HepG2 (cell line): ENCODE measurements at regions of chr16 and their contacts with region 1.

Region 1: GRCh38 chr16:31458844-31459721 is at the start of gene ARMC5:
- DNase-seq: peak; percentile 98
- ATAC-seq: peak; percentile 76
- H3K4me3 ChIP-seq: peak within 1 kb of the TSS; percentile 71 to 98 (median 83)
- H3K27ac ChIP-seq: peak within 1 kb of the TSS; percentile 95
- H3K4me1 ChIP-seq: peaks cover 48% of the 10 kb centered on the region
- H3K27me3 ChIP-seq: no peaks in the 10 kb centered on the region; a peak in 1 of 5 replicates
- CTCF ChIP-seq: peak; percentile 90
- EP300 ChIP-seq: no peak; a peak in 1 of 4 replicates
- POLR2A ChIP-seq: peak; percentile 87 to 97
- RAD21 ChIP-seq: peak; percentile 63
- total RNA-seq, gene ARMC5: 13.0 and 22.3 TPM in 2 replicates

Region 2: DNA sequence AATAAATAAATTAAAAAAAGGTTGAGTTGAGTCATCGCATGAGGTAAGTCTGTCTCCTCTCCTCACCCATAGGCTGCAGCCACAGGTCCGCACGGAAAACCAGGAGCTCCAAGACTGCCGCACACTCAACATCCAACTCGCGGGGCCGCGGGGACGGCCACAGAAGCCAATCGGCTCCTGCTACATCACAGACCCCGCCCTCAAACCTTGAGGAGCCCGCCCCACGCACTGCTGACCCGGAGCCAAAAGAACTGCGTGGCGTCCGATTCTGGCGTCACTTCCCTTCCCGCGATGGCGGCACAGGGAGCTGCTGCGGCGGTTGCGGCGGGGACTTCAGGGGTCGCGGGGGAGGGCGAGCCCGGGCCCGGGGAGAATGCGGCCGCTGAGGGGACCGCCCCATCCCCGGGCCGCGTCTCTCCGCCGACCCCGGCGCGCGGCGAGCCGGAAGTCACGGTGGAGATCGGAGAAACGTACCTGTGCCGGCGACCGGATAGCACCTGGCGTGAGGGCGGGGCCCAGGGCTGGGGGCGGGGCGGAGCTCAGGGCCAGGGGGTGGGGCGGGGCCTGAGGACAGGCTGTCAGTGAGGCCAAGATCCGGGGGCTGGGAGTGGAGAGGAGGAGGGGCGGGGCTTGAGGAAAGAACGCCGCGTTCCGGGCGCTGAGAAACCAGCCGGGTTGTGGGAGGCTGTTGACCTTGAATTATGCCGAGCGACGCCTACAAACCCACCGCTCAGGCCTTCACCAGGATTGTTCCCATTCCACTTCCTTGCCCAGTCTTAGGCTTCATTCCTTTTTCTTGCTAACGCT is 341.5 kb before region 1 on chr16 and contains the start of gene KAT8:
- CTCF ChIA-PET with region 1: no interaction called
- POLR2A ChIA-PET with region 1: interaction called, 16 read pairs
- in situ Hi-C with region 1: no loop called
- intact Hi-C with region 1: no loop called
- DNase-seq: peak; percentile 99
- ATAC-seq: peak; percentile 93
- H3K4me3 ChIP-seq: peak within 1 kb of the TSS; percentile 67 to 83 (median 81)
- H3K27ac ChIP-seq: peak within 1 kb of the TSS; percentile 70
- H3K4me1 ChIP-seq: peaks cover 36% of the 10 kb centered on the region
- H3K27me3 ChIP-seq: no peaks in the 10 kb centered on the region; a peak in 1 of 5 replicates
- CTCF ChIP-seq: peak; percentile 10; the same call in 1 of the 2 replicates
- EP300 ChIP-seq: 0 out of 4 replicates have a peak, but pooled peaks of 1 of the 2 experiments have one; percentile 8
- POLR2A ChIP-seq: peak; percentile 80 to 94
- RAD21 ChIP-seq: peak; percentile 24; the same call in 1 of the 2 replicates
- total RNA-seq, gene KAT8: 69.5 and 79.0 TPM in 2 replicates

Region 3: GRCh38 chr16:31179747-31180459 is 279.2 kb before region 1 on chr16 and contains the start of gene FUS:
- CTCF ChIA-PET with region 1: no interaction called
- POLR2A ChIA-PET with region 1: interaction called, 12 read pairs
- in situ Hi-C with region 1: no loop called
- intact Hi-C with region 1: no loop called
- DNase-seq: peak; percentile 84
- ATAC-seq: peak; percentile 74
- H3K4me3 ChIP-seq: peak within 1 kb of the TSS; percentile 90 to 93 (median 93)
- H3K27ac ChIP-seq: peak within 1 kb of the TSS; percentile 94
- H3K4me1 ChIP-seq: peaks cover 50% of the 10 kb centered on the region
- H3K27me3 ChIP-seq: no peaks in the 10 kb centered on the region; a peak in 1 of 5 replicates
- CTCF ChIP-seq: peak; percentile 4
- EP300 ChIP-seq: peak in 1 of 2 experiments; percentile 28; a peak in 1 of 4 replicates
- POLR2A ChIP-seq: peak; percentile 99 to 100
- RAD21 ChIP-seq: 0 out of 2 replicates have a peak, but pooled peaks have one; percentile 27
- total RNA-seq, gene FUS: 64.8 and 68.1 TPM in 2 replicates

Region 4: DNA sequence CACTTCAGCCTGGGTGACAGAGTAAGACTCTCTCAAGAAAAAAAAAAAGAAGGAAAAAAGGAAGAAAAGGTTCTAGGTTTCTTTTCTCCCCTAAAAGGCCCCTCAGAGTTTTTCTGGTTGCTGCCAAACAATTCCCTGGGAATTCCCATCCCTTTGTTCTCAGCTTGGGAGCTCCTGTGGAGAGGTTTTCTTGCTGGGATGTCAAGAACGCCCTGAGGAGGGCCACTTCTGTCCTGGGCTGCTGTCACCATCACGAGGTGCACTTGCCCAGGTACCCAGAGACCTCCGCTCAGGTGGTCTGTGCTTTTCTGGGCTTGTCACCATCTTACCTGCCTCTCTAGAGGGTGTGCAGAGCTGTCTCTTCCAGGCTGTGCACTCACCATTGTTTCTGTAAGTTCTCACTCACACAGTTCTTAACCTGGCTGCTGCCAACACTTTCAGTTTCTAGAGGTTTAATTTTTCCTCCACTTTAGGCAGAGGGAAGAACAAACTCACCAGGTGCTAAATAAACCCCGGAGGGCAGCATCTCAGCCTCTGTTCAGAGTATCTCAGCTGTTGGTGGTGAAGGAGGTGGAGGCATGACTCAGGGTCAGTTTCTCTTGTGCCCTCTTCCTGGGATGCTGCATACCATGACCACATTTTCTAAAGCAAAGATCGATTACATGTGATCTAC is 28.6 kb before region 1 on chr16:
- CTCF ChIA-PET with region 1: no interaction called
- POLR2A ChIA-PET with region 1: no interaction called
- in situ Hi-C with region 1: no loop called
- intact Hi-C with region 1: no loop called
- DNase-seq: no peak
- ATAC-seq: no peak
- H3K4me3 ChIP-seq: no peak overlapping the region
- H3K27ac ChIP-seq: no peak overlapping the region
- H3K4me1 ChIP-seq: no peaks in the 10 kb centered on the region
- H3K27me3 ChIP-seq: peaks cover 1 to 8% of the 10 kb centered on the region in 2 experiments; a peak in 1 of 5 replicates
- CTCF ChIP-seq: no peak
- EP300 ChIP-seq: no peak
- POLR2A ChIP-seq: no peak
- RAD21 ChIP-seq: no peak

Region 5: GRCh38 chr16:31507929-31508705 is 49.0 kb after region 1 on chr16 and contains the start of gene RUSF1:
- CTCF ChIA-PET with region 1: no interaction called
- POLR2A ChIA-PET with region 1: interaction called, 36 read pairs
- in situ Hi-C with region 1: no loop called
- intact Hi-C with region 1: loop called (anchors 2 kb)
- DNase-seq: peak; percentile 89
- ATAC-seq: peak; percentile 93
- H3K4me3 ChIP-seq: peak within 1 kb of the TSS; percentile 90 to 98 (median 90)
- H3K27ac ChIP-seq: peak within 1 kb of the TSS; percentile 89
- H3K4me1 ChIP-seq: peaks cover 46% of the 10 kb centered on the region
- H3K27me3 ChIP-seq: peaks cover 0 to 6% of the 10 kb centered on the region in 2 experiments; a peak in 2 of 5 replicates
- CTCF ChIP-seq: peak; percentile 37; the same call in 1 of the 2 replicates
- EP300 ChIP-seq: peak; percentile 52 to 55; a peak in 2 of 4 replicates
- POLR2A ChIP-seq: peak; percentile 91 to 96
- RAD21 ChIP-seq: peak; percentile 42
- total RNA-seq, gene RUSF1: 18.3 and 40.8 TPM in 2 replicates

Region 6: GRCh38 chr16:31713071-31713944 is 254.2 kb after region 1 on chr16:
- CTCF ChIA-PET with region 1: no interaction called
- POLR2A ChIA-PET with region 1: interaction called, 34 read pairs
- in situ Hi-C with region 1: no loop called
- intact Hi-C with region 1: no loop called
- DNase-seq: peak; percentile 97
- ATAC-seq: peak; percentile 86
- H3K4me3 ChIP-seq: peak overlapping the region; percentile 74 to 99 (median 91)
- H3K27ac ChIP-seq: peak overlapping the region; percentile 95
- H3K4me1 ChIP-seq: peaks cover 42% of the 10 kb centered on the region
- H3K27me3 ChIP-seq: no peaks in the 10 kb centered on the region; a peak in 1 of 5 replicates
- CTCF ChIP-seq: peak; percentile 31
- EP300 ChIP-seq: no peak
- POLR2A ChIP-seq: peak; percentile 97 to 99
- RAD21 ChIP-seq: peak; percentile 48

Region 7: DNA sequence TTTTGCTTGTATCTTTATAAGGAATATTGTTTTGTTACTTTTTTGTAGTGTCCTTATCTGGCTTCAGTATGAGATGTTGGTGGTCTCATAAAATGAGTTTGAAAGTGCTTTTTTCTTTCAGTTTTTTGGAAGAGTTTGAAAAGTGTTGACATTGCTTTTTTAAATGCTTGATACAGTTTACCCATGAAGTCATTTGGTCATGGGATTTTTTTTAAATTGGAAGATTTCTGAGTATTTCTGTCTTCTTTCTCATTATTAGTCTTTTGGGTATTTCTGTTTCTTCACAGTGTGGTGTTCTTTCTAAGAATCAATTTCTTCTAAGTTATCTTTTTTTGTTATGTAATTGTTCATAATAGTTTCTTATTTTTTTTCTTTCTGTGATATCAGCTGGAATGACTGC is 429.7 kb after region 1 on chr16:
- CTCF ChIA-PET with region 1: no interaction called
- POLR2A ChIA-PET with region 1: no interaction called
- in situ Hi-C with region 1: no loop called
- intact Hi-C with region 1: no loop called
- DNase-seq: no peak
- ATAC-seq: no peak
- H3K4me3 ChIP-seq: no peak overlapping the region
- H3K27ac ChIP-seq: no peak overlapping the region
- H3K4me1 ChIP-seq: no peaks in the 10 kb centered on the region
- H3K27me3 ChIP-seq: no peaks in the 10 kb centered on the region
- CTCF ChIP-seq: no peak
- EP300 ChIP-seq: no peak
- POLR2A ChIP-seq: no peak
- RAD21 ChIP-seq: no peak